ENCODE measurements at regions of chr1 and their contacts with region 1.

Region 1: GRCh38 chr1:51897699-51898031 is 19.1 kb upstream of the NRDC start:
- DNase-seq: no peak
- H3K4me3 ChIP-seq: no peak overlapping the region
- H3K27ac ChIP-seq: no peak overlapping the region
- H3K4me1 ChIP-seq: no peaks in the 10 kb centered on the region
- H3K27me3 ChIP-seq: no peaks in the 10 kb centered on the region
- CTCF ChIP-seq: no peak

Region 2: DNA sequence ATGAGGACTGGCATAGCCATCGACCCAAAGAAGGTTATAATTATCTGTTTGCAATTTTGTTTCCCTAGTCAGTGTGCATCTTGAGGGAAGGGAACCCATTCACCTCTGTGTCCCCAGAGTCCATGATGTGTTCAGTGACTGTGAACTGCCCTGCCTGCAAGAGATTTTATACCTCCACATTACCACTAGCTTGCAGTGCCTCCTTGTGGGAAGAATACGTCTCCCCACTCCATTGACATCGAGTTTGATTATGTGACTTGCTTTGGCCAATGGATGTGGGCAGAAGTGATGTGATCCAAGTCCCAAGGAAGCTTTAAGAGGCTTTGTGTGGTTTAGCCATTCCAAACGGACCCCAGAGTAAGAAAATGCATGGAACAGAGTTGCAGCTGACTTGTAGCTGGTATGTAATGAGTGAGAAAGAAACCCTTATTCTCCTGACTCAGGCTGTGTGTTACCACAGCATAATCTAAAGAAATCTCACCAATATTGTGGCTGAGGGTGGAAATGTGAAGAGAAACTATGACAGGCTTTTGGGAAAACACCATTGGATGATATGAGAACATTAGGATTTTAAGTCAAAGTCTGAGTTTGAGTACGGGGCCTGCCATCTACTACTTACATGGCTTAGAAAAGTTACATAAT is 28.6 kb after region 1 on chr1:
- intact Hi-C with region 1: no loop called
- DNase-seq: no peak
- H3K4me3 ChIP-seq: no peak overlapping the region
- H3K27ac ChIP-seq: no peak overlapping the region
- H3K4me1 ChIP-seq: no peaks in the 10 kb centered on the region
- H3K27me3 ChIP-seq: no peaks in the 10 kb centered on the region
- CTCF ChIP-seq: peak in 1 of 3 experiments; percentile 32

Region 3: GRCh38 chr1:52002038-52002917 is 104.6 kb after region 1 on chr1:
- intact Hi-C with region 1: loop called (anchors 2 kb)
- DNase-seq: no peak
- H3K4me3 ChIP-seq: no peak overlapping the region
- H3K27ac ChIP-seq: no peak overlapping the region
- H3K4me1 ChIP-seq: peaks cover 0 to 3% of the 10 kb centered on the region in 2 donors
- H3K27me3 ChIP-seq: no peaks in the 10 kb centered on the region
- CTCF ChIP-seq: peak; percentile 68 to 84 (median 82)